A549 (cell line): ENCODE measurements at regions of chr2 and their contacts with region 1.

Region 1: GRCh38 chr2:237026981-237027711 is 58.5 kb upstream of the COPS8 start:
- DNase-seq: peak; percentile 29 to 78
- ATAC-seq: peak; percentile 80 to 89
- H3K4me3 ChIP-seq: no peak overlapping the region
- H3K27ac ChIP-seq: peak overlapping the region; percentile 42 to 77; a peak in 5 of 6 replicates
- H3K4me1 ChIP-seq: peaks cover 15% of the 10 kb centered on the region
- CTCF ChIP-seq: peak; percentile 83
- EP300 ChIP-seq: no peak
- POLR2A ChIP-seq: no peak
- RAD21 ChIP-seq: peak; percentile 93 to 98

Region 2: GRCh38 chr2:236352761-236353593 is 674.2 kb before region 1 on chr2:
- CTCF ChIA-PET with region 1: interaction called, 63 read pairs
- POLR2A ChIA-PET with region 1: no interaction called
- DNase-seq: peak; percentile 13 to 25
- ATAC-seq: peak in 1 of 2 experiments; percentile 56; a peak in 2 of 6 replicates
- H3K4me3 ChIP-seq: no peak overlapping the region
- H3K27ac ChIP-seq: no peak overlapping the region
- H3K4me1 ChIP-seq: no peaks in the 10 kb centered on the region
- CTCF ChIP-seq: peak; percentile 96
- EP300 ChIP-seq: no peak
- POLR2A ChIP-seq: no peak
- RAD21 ChIP-seq: peak; percentile 85 to 93

Region 3: DNA sequence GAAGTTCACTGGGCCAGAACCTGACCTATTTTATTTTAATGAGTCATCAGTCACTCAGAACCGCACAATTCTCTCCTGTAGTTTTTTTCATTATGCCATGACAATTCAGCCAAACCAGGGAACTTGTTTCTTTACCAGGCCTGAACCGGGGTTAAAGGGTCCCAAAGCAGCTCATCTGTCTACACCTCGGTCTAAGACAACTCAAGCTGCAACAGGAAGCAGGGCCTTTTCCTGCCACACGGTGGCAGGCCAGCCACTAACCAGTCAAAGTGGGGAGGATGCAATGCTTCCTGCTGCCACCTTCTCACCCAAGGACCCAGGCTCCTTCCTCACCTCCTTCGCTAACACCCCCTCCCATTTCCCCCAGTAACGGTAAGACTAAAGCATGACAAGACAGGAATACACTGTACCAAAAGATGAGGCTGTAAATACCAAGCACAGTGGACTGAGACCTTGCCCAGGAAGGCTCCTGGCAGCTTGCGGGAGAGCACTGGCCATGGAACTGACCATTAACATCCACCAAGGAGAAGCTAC is 514.2 kb before region 1 on chr2:
- CTCF ChIA-PET with region 1: interaction called, 22 read pairs
- POLR2A ChIA-PET with region 1: no interaction called
- DNase-seq: peak; percentile 28 to 47
- ATAC-seq: peak; percentile 88 to 97
- H3K4me3 ChIP-seq: no peak overlapping the region
- H3K27ac ChIP-seq: peak overlapping the region in 1 of 2 experiments; percentile 28; a peak in 1 of 6 replicates
- H3K4me1 ChIP-seq: no peaks in the 10 kb centered on the region
- CTCF ChIP-seq: peak; percentile 59
- EP300 ChIP-seq: no peak
- POLR2A ChIP-seq: no peak; the same call in 1 of the 2 replicates
- RAD21 ChIP-seq: peak; percentile 65 to 73

Region 4: DNA sequence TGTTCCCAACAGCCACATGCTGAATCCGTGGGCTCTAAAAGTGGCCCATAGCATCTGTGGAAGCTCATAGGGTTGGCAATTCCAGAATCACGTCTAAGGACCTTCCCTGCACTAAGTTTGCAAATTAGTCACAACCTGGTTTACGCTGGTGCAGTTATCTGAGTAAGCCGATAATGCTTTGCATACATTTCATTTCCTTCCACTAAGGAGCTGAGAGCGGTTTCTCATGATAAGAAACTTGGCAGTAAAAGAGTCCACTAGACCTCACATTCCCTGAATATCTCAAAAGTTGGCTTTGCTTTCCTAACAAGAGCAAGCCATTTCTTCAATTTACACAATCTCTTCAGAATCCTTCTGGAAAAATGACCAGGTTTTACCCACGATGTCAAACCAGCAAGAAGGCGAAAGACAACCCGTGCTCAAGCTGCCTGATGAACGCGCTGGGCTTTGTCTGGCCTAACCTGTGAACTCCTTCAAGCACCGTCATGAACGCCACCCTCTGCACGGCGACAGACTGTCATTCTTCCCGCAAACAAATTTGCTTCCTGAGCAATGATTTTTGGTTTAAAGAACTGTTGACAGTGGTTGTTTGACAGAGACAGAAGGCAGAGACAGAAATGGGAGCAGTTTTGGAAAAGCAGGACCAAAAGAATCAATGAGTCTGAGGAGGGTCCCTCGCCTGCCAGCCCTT is 14.4 kb before region 1 on chr2:
- CTCF ChIA-PET with region 1: interaction called, 10 read pairs
- POLR2A ChIA-PET with region 1: no interaction called
- DNase-seq: no peak
- ATAC-seq: no peak
- H3K4me3 ChIP-seq: no peak overlapping the region
- H3K27ac ChIP-seq: no peak overlapping the region
- H3K4me1 ChIP-seq: no peaks in the 10 kb centered on the region
- CTCF ChIP-seq: no peak
- EP300 ChIP-seq: no peak
- POLR2A ChIP-seq: no peak
- RAD21 ChIP-seq: no peak

Region 5: GRCh38 chr2:237052798-237053460 is 25.8 kb after region 1 on chr2:
- CTCF ChIA-PET with region 1: no interaction called
- POLR2A ChIA-PET with region 1: no interaction called
- DNase-seq: no peak
- ATAC-seq: no peak
- H3K4me3 ChIP-seq: no peak overlapping the region
- H3K27ac ChIP-seq: no peak overlapping the region
- H3K4me1 ChIP-seq: no peaks in the 10 kb centered on the region
- CTCF ChIP-seq: no peak
- EP300 ChIP-seq: no peak
- POLR2A ChIP-seq: no peak
- RAD21 ChIP-seq: no peak

Region 6: DNA sequence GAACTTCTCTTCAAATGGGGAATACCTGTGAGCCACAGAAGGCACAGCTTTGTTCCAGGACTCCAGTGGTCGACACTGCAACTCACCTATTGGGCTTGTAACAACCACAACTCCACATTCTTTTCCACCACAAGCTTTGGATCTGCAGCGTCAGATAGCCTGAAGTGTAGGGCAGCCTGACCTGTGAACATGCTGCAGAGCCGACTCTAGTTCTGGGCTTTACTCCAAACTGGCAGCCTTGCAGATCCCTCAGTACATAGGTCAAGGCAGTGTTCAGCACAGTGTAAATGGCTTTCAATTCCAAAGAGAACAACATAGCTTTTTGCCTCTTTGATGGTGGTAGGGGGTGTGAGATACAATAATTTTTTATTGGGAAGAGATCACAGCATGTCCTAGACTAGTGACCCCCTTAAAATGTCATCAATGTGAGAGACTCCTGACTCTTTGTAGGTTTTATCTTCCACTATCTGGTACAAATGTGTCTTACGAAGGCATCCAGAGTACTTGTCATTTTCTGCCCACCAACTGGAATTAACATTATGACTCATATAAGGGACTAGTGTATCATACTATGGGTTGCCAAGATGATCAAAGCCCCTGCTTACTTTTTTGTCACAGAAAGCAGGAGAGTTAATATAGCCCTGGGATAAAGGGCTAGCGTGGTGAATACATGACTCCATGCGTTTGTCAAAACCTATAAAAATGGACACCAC is 208.4 kb after region 1 on chr2:
- CTCF ChIA-PET with region 1: no interaction called
- POLR2A ChIA-PET with region 1: no interaction called
- DNase-seq: no peak
- ATAC-seq: peak; percentile 43 to 77; a peak in 4 of 6 replicates
- H3K4me3 ChIP-seq: no peak overlapping the region
- H3K27ac ChIP-seq: peak overlapping the region; percentile 21 to 55; a peak in 4 of 6 replicates
- H3K4me1 ChIP-seq: peaks cover 16% of the 10 kb centered on the region; the same call in 2 of the 3 replicates
- CTCF ChIP-seq: no peak
- EP300 ChIP-seq: no peak
- POLR2A ChIP-seq: no peak
- RAD21 ChIP-seq: no peak

Region 7: GRCh38 chr2:237841051-237841450 is 813.9 kb after region 1 on chr2:
- CTCF ChIA-PET with region 1: no interaction called
- POLR2A ChIA-PET with region 1: no interaction called
- DNase-seq: no peak
- ATAC-seq: no peak
- H3K4me3 ChIP-seq: no peak overlapping the region
- H3K27ac ChIP-seq: no peak overlapping the region
- H3K4me1 ChIP-seq: no peaks in the 10 kb centered on the region
- CTCF ChIP-seq: no peak
- EP300 ChIP-seq: no peak
- POLR2A ChIP-seq: no peak
- RAD21 ChIP-seq: no peak